Heart right ventricle (tissue), 16 donors: ENCODE measurements at regions of chr13 and their contacts with region 1.

Region 1: GRCh38 chr13:110509971-110510786 is 51.3 kb downstream of the RAB20 start:
- DNase-seq: peak; percentile 40 to 51
- ATAC-seq: peak; percentile 3 to 63 (median 27)
- H3K4me3 ChIP-seq: no peak overlapping the region
- H3K27ac ChIP-seq: peak overlapping the region; percentile 16 to 96 (median 79)
- H3K4me1 ChIP-seq: peaks cover 5 to 55% (median 36%) of the 10 kb centered on the region in 9 donors
- H3K27me3 ChIP-seq: no peaks in the 10 kb centered on the region
- CTCF ChIP-seq: no peak

Region 2: DNA sequence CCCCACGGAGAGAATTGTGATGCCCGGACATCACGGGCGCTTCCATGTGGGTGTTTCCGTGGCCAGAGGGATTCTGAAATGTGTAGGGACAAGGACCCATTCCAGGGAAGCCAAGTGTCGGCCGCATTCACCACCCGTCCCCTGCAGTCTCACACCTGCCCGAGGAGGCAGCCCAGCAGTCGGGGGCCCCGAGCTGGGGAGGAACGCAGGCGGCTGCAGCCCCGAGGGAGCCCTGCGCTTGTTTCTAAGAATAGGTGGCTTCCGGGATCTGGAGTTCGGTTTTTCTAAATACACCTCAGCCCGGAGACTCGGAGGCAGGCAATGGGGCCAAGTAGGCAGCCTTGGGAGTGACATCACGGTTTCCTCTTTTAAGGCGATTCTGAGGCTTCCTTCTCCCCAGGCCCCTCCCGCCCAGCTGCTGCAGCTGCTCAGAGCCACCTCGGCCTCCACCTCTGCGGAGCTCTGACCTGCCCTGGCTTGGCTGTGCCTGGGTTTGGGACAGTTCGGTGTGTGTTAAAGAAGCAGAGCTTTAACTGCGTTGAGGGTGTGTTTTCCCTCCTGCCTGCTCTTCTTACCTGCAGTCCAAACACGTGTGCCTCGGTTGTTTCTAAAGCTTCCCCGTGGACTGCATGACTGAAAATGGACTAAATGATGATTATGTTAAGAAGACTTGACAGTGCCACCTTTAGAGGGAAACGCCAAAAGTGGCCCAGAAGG is 122.6 kb before region 1 on chr13:
- intact Hi-C with region 1: no loop called
- DNase-seq: peak; percentile 51 to 86
- ATAC-seq: peak; percentile 72 to 89 (median 78)
- H3K4me3 ChIP-seq: peak overlapping the region in 8 of 10 donors; percentile 2 to 42 (median 36)
- H3K27ac ChIP-seq: peak overlapping the region; percentile 68 to 94 (median 82)
- H3K4me1 ChIP-seq: peaks cover 14 to 66% (median 54%) of the 10 kb centered on the region in 9 donors
- H3K27me3 ChIP-seq: peaks cover 0 to 9% (median 0%) of the 10 kb centered on the region in 7 donors
- CTCF ChIP-seq: no peak

Region 3: GRCh38 chr13:110471833-110472162 is 38.4 kb before region 1 on chr13:
- intact Hi-C with region 1: no loop called
- DNase-seq: peak; percentile 35 to 68
- ATAC-seq: peak; percentile 35 to 90 (median 80)
- H3K4me3 ChIP-seq: no peak overlapping the region
- H3K27ac ChIP-seq: peak overlapping the region in 5 of 10 donors; percentile 1 to 67 (median 25)
- H3K4me1 ChIP-seq: peaks cover 0 to 32% (median 6%) of the 10 kb centered on the region in 9 donors
- H3K27me3 ChIP-seq: no peaks in the 10 kb centered on the region
- CTCF ChIP-seq: no peak

Region 4: GRCh38 chr13:110485603-110486002 is 24.6 kb before region 1 on chr13:
- intact Hi-C with region 1: no loop called
- DNase-seq: no peak
- ATAC-seq: no peak
- H3K4me3 ChIP-seq: no peak overlapping the region
- H3K27ac ChIP-seq: no peak overlapping the region
- H3K4me1 ChIP-seq: no peaks in the 10 kb centered on the region
- H3K27me3 ChIP-seq: no peaks in the 10 kb centered on the region
- CTCF ChIP-seq: no peak

Region 5: GRCh38 chr13:110525328-110526319 is 15.4 kb after region 1 on chr13:
- intact Hi-C with region 1: loop called in 1 of 10 experiments (anchors 2 kb)
- DNase-seq: peak; percentile 51 to 54
- ATAC-seq: peak; percentile 18 to 75 (median 64)
- H3K4me3 ChIP-seq: no peak overlapping the region
- H3K27ac ChIP-seq: peak overlapping the region; percentile 31 to 92 (median 85)
- H3K4me1 ChIP-seq: peaks cover 22 to 91% (median 55%) of the 10 kb centered on the region in 9 donors
- H3K27me3 ChIP-seq: no peaks in the 10 kb centered on the region
- CTCF ChIP-seq: no peak